GM18951 (cell line): ENCODE measurements at regions of chr2 and their contacts with region 1.

Region 1: DNA sequence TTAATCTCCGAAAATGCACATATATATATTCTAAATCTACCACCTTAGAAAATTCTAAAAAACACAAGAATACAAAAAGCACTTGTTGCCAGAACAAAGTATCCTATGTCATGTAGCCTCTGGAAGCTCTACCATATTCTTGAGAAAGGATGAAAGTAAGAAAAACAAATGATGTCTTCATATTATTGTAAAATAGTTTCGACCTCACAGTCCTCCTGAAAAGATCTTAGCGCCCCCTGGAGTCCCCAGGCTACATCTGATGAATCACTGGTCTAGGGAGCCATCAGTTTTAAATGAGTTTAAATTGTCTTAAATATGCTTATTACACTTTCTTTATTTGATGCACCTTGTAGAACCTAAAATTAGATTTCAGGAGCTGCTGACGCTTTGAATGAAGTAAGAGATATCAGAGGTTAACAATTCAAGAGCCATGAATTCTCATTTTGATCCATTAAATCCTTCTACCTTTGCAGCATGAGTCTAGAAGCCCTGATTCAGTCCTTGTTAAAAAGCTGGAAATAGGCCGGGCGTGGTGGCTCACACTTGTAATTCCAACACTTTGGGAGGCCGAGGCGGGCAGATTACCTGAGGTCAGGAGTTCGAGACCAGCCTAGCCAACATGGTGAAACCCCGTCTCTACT is 138.8 kb downstream of the MCFD2 start:
- POLR2A ChIP-seq: no peak

Region 2: DNA sequence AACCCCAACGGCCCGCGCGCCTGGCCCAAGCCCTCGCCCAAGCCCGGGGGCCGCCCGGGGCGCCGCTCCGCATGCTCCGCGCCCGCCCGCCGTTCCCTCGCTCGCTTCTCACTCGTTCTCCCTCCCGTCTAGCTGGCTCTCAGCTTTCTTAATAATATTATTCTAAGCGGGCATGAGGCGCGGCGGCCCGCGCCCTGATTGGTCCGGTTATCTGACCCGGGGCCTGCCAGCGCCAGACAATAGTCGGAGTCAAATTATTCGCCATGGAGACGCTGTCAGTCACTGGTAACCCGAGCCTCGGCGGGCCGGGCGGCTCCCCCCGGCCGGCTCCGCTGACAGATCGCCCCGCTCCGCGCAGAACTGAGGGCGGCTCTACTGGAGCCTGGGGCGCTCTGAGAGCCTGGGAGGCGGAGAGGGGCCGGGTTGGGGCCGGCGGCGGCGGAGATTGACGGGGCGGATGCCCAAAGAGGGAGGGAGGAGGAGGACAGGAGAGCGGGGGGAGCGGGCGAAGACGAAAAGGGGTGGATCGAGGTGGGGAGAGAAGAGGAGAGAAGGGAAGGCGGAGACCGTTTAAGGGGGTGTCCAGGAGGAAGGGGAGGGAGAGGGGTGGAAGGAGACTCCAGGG is 1767.4 kb before region 1 on chr2 and contains the start of gene SIX2:
- in situ Hi-C with region 1: loop called (anchors 25 kb)
- POLR2A ChIP-seq: no peak

Region 3: GRCh38 chr2:46887028-46887885 is 110.5 kb after region 1 on chr2:
- in situ Hi-C with region 1: no loop called
- POLR2A ChIP-seq: no peak

Region 4: GRCh38 chr2:47070920-47071824 is 294.4 kb after region 1 on chr2:
- in situ Hi-C with region 1: no loop called
- POLR2A ChIP-seq: no peak